ENCODE measurements at regions of chr6 and their contacts with region 1.

Region 1: DNA sequence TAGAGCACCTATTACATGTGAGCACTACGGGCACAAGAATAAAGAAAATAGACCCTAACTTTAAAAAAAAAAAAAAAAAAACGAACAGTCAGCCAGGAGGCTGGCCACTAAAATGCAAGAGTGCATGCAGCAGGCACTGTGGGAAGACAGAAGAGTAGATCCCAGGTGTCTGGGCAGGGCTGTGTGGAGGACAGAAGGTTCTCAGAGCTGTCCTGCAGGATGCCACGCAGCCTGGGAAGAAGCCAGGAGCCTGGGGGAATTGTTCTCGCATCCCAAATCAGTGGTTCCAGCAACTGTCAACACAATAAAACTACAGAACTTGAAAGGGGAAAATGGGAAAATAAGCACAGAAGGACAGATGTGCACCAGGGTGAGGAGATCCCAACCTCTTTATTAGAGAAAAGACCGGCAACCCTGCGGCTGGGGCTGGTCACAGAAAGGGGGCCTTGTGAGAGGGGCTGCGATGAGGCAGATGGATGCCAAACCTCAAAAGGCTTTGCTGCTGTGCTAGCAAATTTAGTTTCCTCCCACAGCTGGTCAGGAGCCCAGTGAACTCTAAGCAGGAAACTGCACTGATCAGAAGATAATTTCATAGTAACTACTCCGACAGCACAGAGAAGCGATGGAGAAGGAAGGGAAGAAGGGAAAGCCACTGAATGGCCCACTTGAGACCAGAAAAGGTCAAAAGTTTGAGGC is 30.9 kb downstream of the MAP3K5 start:
- DNase-seq: no peak
- H3K4me3 Mint-ChIP-seq: peak overlapping the region; percentile 69
- H3K27ac Mint-ChIP-seq: peak overlapping the region; percentile 59
- H3K4me1 Mint-ChIP-seq: peaks cover 67% of the 10 kb centered on the region
- H3K27me3 Mint-ChIP-seq: no peaks in the 10 kb centered on the region

Region 2: DNA sequence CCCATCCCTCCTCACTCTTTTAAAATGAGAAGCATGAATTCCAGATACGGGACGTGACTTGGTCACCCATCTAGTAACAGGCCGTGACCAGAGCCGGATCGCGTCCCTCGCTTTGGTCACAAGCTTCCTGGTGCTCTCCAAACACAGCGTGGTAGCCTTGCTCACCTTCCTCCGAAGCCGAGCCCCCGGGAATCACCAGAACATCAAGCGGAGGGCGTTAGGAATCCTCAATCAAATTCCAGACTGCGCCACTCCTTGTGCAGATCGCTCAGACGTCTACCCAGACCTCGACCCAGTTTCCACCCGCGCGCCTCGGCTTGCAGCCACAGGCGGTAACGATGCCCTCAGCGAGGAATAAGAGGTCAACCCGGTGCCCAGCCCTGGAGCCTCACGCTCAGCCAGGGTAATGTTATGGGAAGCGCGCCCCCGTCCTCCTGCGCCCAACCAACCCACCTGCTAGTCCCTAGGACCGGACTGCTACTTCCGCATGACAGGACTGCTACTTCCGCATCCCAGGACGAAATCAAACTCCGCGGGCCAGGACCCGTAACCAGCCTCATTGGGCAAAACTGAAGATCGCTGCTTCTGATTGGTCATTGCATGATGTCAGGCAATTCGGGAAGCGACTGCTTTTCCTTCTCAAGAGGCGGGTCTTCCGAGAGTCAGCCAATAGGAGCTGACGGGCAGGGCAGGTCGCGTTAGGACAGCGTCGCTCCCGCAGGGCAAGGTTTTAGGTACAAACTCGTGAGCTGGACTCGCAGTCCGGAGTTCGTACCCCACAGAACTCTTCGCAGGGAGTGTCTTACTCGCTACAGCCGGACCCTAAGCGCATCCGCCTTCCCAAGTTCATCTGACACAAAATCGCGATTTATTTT is 511.3 kb before region 1 on chr6 and contains the start of gene MTFR2:
- intact Hi-C with region 1: no loop called
- DNase-seq: peak; percentile 95
- H3K4me3 Mint-ChIP-seq: peak within 1 kb of the TSS; percentile 98
- H3K27ac Mint-ChIP-seq: peak within 1 kb of the TSS; percentile 92
- H3K4me1 Mint-ChIP-seq: peaks cover 66% of the 10 kb centered on the region
- H3K27me3 Mint-ChIP-seq: no peaks in the 10 kb centered on the region
- total RNA-seq, gene MTFR2: 23.3 and 27.6 TPM in 2 replicates

Region 3: GRCh38 chr6:136723780-136724179 is 37.6 kb before region 1 on chr6:
- intact Hi-C with region 1: loop called (anchors 5 kb)
- DNase-seq: peak; percentile 6
- H3K4me3 Mint-ChIP-seq: peak overlapping the region; percentile 6
- H3K27ac Mint-ChIP-seq: peak overlapping the region; percentile 14
- H3K4me1 Mint-ChIP-seq: peaks cover 64% of the 10 kb centered on the region
- H3K27me3 Mint-ChIP-seq: no peaks in the 10 kb centered on the region

Region 4: DNA sequence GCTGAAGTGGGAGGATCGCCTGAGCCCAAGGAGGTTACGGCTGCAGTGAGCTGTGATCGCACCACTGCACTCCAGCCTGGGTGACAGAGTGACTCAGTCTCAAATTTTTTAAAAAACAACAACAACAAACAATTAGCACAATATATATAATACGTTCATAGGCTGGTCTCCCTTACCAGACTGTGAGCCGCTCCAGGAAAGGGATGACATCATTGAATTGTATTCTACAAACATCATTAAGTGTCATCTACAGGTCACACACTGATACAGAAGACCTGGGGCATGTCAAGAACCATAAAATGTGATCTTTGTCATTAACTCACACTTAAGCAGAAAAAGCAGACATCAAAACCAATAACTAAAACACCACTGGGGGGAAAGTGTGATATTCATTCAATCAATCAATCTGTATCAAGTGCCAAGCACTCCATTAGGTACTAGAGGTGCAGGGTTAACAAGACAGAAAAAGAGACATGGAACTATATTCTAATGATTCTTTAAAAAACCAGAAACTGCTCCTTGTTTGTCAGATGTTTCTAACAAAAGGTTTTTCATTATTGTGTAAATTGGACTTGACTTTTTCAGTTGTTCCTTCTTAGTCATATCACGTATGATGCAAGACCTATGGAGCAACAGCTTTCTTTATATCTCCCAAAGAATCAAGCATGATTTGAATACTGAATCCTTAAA is 13.1 kb after region 1 on chr6:
- intact Hi-C with region 1: loop called (anchors 1 kb)
- DNase-seq: no peak
- H3K4me3 Mint-ChIP-seq: no peak overlapping the region
- H3K27ac Mint-ChIP-seq: peak overlapping the region; percentile 70
- H3K4me1 Mint-ChIP-seq: peaks cover 62% of the 10 kb centered on the region
- H3K27me3 Mint-ChIP-seq: no peaks in the 10 kb centered on the region

Region 5: DNA sequence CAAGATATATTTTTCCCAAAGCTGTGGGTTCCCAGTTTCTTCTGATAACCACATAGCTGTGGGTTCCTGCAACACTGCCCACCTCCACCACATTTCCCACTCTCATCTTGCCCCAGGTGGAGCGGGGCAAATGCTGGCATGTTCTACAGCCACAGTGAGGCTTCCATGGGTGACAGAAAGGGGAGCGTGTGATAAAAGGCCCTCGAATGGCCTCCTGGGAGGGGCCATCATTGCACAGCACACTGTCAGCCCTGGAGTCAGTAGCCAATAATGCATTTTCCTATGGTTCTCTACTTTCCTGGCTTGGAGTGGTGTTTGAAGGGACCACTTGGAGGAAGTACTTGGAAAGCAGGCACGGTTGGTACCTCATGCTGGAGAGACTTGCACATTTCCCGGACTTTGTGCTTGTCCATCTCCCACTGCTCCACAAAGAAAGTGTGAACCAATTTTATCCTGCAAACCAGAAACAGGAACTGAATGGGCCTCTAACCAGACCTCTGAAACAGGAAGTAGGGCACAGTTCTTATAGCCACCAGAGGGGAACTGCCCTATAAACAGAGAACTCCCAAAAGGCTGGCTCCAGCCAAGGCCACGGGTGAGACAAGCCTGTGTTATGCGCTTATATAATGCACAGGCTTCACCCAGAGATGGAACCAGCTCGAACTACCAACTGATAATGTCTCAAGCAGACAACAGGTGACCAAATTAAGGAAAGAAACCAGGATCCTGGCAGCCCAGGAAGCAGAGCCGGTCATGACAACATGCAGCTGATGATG is 22.3 kb after region 1 on chr6:
- intact Hi-C with region 1: loop called (anchors 2 kb)
- DNase-seq: no peak
- H3K4me3 Mint-ChIP-seq: peak overlapping the region; percentile 62
- H3K27ac Mint-ChIP-seq: peak overlapping the region; percentile 80
- H3K4me1 Mint-ChIP-seq: peaks cover 84% of the 10 kb centered on the region
- H3K27me3 Mint-ChIP-seq: no peaks in the 10 kb centered on the region